ENCODE measurements at regions of chr10 and their contacts with region 1.

Region 1: GRCh38 chr10:85548034-85548433 is 818.6 kb downstream of the GRID1 start:
- DNase-seq: peak; percentile 7 to 85 (median 54)
- H3K4me3 ChIP-seq: no peak overlapping the region
- H3K27ac ChIP-seq: peak overlapping the region in 1 of 59 donors; percentile 34
- H3K27me3 ChIP-seq: no peaks in the 10 kb centered on the region
- CTCF ChIP-seq: peak in 55 of 56 donors; percentile 52 to 87 (median 72)

Region 2: GRCh38 chr10:85621562-85621961 is 73.5 kb after region 1 on chr10:
- intact Hi-C with region 1: no loop called
- DNase-seq: no peak
- H3K4me3 ChIP-seq: no peak overlapping the region
- H3K27ac ChIP-seq: no peak overlapping the region
- H3K27me3 ChIP-seq: no peaks in the 10 kb centered on the region
- CTCF ChIP-seq: no peak

Region 3: DNA sequence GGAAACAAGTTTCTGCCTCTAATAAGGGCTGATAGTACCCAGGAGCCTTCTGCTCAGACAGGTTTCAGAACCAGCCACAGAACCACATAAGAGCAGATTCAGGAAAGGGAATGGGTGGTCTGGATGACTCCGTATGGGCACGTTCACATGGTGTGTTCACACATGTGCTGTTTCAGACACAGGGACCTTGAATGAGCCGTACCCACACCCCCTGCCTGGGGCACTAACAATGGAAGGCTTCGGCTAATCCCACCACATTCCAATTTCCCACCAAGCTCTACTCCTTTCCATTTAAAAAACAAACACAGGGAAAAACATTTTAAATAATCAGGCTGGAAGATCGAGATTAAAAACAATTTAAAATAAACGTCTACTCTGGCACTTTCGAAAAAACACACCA is 601.2 kb after region 1 on chr10:
- intact Hi-C with region 1: loop called in 1 of 2 experiments (anchors 10 kb)
- DNase-seq: no peak
- H3K4me3 ChIP-seq: no peak overlapping the region
- H3K27ac ChIP-seq: no peak overlapping the region
- H3K27me3 ChIP-seq: no peaks in the 10 kb centered on the region
- CTCF ChIP-seq: no peak